ENCODE measurements at regions of chrX and their contacts with region 1.

Region 1: GRCh38 chrX:85544609-85545008 is 165.1 kb upstream of the POF1B start:
- DNase-seq: no peak
- ATAC-seq: no peak
- H3K4me3 ChIP-seq: no peak overlapping the region
- H3K27ac ChIP-seq: no peak overlapping the region
- H3K4me1 ChIP-seq: no peaks in the 10 kb centered on the region
- H3K27me3 ChIP-seq: no peaks in the 10 kb centered on the region
- CTCF ChIP-seq: peak in 2 of 3 experiments; percentile 23 to 34; a peak in 3 of 6 replicates
- EP300 ChIP-seq: no peak
- POLR2A ChIP-seq: no peak
- RAD21 ChIP-seq: 0 out of 2 replicates have a peak, but pooled peaks have one; percentile 35

Region 2: GRCh38 chrX:85084770-85085393 is 459.7 kb before region 1 on chrX:
- CTCF ChIA-PET with region 1: interaction called, 4 read pairs
- POLR2A ChIA-PET with region 1: no interaction called
- RAD21 ChIA-PET with region 1: no interaction called
- SMC1A ChIA-PET with region 1: interaction called, 4 read pairs
- in situ Hi-C with region 1: no loop called
- intact Hi-C with region 1: loop called (anchors 1 kb)
- DNase-seq: peak; percentile 8
- ATAC-seq: peak; percentile 82
- H3K4me3 ChIP-seq: no peak overlapping the region
- H3K27ac ChIP-seq: no peak overlapping the region
- H3K4me1 ChIP-seq: no peaks in the 10 kb centered on the region
- H3K27me3 ChIP-seq: no peaks in the 10 kb centered on the region
- CTCF ChIP-seq: peak; percentile 65 to 81 (median 73)
- EP300 ChIP-seq: no peak
- POLR2A ChIP-seq: no peak
- RAD21 ChIP-seq: peak; percentile 65